IMR-90 (cell line): ENCODE measurements at regions of chr13 and their contacts with region 1.

Region 1: DNA sequence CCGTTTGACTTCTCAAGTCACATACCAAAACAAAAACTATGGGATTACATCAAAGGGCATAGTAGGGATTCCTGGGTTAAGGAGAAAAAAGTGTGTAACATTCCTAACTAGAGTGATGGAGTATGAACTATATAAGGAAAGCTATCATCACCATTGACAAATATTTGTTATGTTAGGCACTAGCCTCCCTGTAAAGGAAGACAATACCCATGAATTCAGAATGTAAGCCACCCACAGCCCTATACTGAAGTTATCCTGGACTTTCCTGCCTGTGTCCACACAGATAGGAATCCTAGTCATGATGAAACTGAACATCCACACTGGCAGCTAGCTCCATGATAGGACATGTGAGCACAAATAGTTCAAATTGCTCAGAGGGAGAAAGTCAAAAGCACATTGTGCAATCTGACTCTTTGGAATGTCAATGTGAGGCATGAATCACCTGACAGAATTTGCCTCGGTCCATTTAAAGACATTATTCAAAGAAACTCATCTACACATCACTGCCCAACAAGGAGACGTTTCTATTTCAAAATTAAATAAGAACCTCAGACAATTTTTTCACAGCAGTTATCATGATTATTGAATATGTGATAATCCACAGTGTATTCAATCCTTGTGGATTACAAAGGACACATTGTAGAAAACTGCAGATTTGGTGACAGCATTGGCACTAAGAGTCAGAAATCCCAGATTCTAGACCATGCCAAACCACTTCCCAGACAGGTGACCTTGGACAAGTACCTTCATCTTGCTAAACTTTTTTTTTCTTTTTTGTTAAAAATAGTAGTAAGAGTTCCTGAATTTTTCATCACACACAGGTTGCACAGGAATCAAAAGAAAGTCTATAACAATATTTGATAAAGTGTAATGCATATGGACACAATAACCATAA is 529.3 kb downstream of the IRS2 start:
- DNase-seq: peak; percentile 97
- ATAC-seq: peak; percentile 94
- H3K4me3 ChIP-seq: no peak overlapping the region
- H3K27ac ChIP-seq: peak overlapping the region; percentile 72
- H3K4me1 ChIP-seq: no peaks in the 10 kb centered on the region; the same call in 1 of the 2 replicates
- H3K27me3 ChIP-seq: no peaks in the 10 kb centered on the region
- CTCF ChIP-seq: no peak
- POLR2A ChIP-seq: no peak
- RAD21 ChIP-seq: no peak

Region 2: DNA sequence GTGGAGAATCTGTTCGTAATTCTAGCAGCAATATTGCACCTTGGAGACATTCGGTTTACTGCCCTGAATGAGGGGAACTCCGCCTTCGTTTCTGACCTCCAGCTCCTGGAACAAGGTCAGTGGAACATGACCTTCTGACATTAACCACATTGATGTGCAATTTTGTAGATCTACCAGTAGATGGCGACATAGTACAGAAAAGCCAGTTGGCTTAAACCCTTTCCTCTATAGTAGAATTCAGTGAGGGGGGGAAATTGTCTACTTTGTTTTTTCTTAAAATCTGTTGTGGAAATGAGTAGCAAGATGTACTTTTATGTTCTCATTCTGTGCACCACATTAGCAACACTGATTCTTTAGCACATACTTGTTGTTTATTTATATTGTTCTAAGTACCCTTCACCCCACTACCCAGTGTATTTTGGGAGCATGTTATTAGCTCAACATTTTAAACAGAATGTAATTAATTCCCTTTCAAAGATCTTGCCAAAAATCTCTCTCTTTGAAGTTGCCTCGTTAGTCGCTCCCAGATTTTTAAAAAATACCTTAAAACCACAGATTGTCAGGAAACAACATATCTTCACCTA is 295.5 kb before region 1 on chr13:
- CTCF ChIA-PET with region 1: no interaction called
- POLR2A ChIA-PET with region 1: no interaction called
- dilution Hi-C with region 1: no loop called
- in situ Hi-C with region 1: no loop called
- intact Hi-C with region 1: loop called (anchors 10 kb)
- DNase-seq: peak; percentile 62
- ATAC-seq: peak; percentile 56
- H3K4me3 ChIP-seq: no peak overlapping the region
- H3K27ac ChIP-seq: no peak overlapping the region
- H3K4me1 ChIP-seq: peaks cover 11% of the 10 kb centered on the region
- H3K27me3 ChIP-seq: no peaks in the 10 kb centered on the region
- CTCF ChIP-seq: peak; percentile 88
- POLR2A ChIP-seq: no peak
- RAD21 ChIP-seq: peak; percentile 94

Region 3: DNA sequence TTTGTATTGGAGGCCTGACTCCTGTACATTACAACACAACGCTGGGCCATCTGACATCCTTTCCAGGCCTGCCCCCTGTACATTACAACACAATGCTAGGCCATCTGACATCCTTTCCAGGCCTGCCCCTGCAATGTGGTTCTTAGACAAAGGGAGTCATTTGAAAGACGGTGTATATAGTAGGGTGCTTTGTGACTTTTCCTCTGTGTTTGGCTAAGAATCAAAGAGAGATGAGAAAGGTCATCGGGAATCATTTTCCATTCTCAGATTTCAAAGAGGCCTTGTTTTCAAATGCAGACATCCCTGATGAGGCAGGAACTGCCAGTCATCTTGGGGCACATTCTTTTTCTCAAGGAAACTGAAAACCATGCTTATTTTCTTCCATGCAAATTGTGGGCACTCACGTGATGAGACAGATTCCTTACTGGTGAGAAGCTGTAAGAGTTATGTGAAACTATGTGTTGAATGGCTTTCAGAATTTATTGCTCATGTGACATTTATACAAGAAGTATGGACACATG is 76.1 kb before region 1 on chr13:
- CTCF ChIA-PET with region 1: no interaction called
- POLR2A ChIA-PET with region 1: no interaction called
- dilution Hi-C with region 1: no loop called
- in situ Hi-C with region 1: no loop called
- intact Hi-C with region 1: loop called (anchors 2 kb)
- DNase-seq: peak; percentile 90
- ATAC-seq: peak; percentile 93
- H3K4me3 ChIP-seq: no peak overlapping the region
- H3K27ac ChIP-seq: peak overlapping the region; percentile 13; the same call in 1 of the 2 replicates
- H3K4me1 ChIP-seq: peaks cover 3% of the 10 kb centered on the region
- H3K27me3 ChIP-seq: no peaks in the 10 kb centered on the region
- CTCF ChIP-seq: no peak
- POLR2A ChIP-seq: no peak
- RAD21 ChIP-seq: no peak

Region 4: DNA sequence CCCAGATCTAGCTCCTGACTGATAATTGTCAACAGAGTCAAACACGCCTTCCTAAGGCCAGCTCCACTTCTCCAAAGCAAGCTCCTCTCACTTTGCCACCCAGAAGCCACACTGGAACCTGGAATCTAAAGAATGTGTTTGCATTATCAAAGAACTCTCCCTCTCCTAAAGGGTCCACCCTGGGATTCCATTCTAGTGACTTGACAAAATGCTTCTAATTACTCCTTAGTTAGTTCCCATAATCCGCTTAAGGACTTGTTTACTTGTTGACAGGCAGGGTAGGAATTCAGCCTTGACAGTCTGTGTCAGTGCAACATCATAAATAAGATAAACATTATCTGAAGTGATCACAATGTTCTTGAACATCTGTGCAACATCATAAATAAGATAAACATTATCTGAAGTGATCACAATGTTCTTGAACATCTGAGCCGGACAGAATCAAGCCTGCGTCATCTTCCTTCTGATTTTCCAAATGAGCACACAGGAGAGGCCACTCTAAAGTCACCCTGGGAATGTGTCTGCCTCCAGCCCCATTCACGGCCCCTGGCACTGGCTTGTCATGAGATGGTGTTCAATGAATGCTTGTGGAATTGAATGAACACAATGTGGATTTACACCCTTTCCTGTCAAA is 17.2 kb after region 1 on chr13:
- CTCF ChIA-PET with region 1: no interaction called
- POLR2A ChIA-PET with region 1: no interaction called
- dilution Hi-C with region 1: no loop called
- in situ Hi-C with region 1: no loop called
- intact Hi-C with region 1: loop called (anchors 2 kb)
- DNase-seq: peak; percentile 72
- ATAC-seq: peak; percentile 86
- H3K4me3 ChIP-seq: no peak overlapping the region
- H3K27ac ChIP-seq: peak overlapping the region; percentile 36
- H3K4me1 ChIP-seq: peaks cover 10% of the 10 kb centered on the region; the same call in 1 of the 2 replicates
- H3K27me3 ChIP-seq: no peaks in the 10 kb centered on the region
- CTCF ChIP-seq: no peak
- POLR2A ChIP-seq: no peak
- RAD21 ChIP-seq: no peak

Region 5: GRCh38 chr13:109422161-109422560 is 165.0 kb after region 1 on chr13:
- CTCF ChIA-PET with region 1: no interaction called
- POLR2A ChIA-PET with region 1: no interaction called
- dilution Hi-C with region 1: no loop called
- in situ Hi-C with region 1: no loop called
- intact Hi-C with region 1: no loop called
- DNase-seq: no peak
- ATAC-seq: no peak
- H3K4me3 ChIP-seq: no peak overlapping the region
- H3K27ac ChIP-seq: no peak overlapping the region
- H3K4me1 ChIP-seq: no peaks in the 10 kb centered on the region
- H3K27me3 ChIP-seq: no peaks in the 10 kb centered on the region; the same call in 1 of the 2 replicates
- CTCF ChIP-seq: no peak
- POLR2A ChIP-seq: no peak
- RAD21 ChIP-seq: no peak

Region 6: GRCh38 chr13:109743706-109744453 is 486.8 kb after region 1 on chr13:
- CTCF ChIA-PET with region 1: no interaction called
- POLR2A ChIA-PET with region 1: no interaction called
- dilution Hi-C with region 1: no loop called
- in situ Hi-C with region 1: no loop called
- intact Hi-C with region 1: loop called (anchors 10 kb)
- DNase-seq: peak; percentile 78
- ATAC-seq: peak; percentile 52
- H3K4me3 ChIP-seq: no peak overlapping the region
- H3K27ac ChIP-seq: no peak overlapping the region
- H3K4me1 ChIP-seq: peaks cover 3% of the 10 kb centered on the region; the same call in 1 of the 2 replicates
- H3K27me3 ChIP-seq: peaks cover 22% of the 10 kb centered on the region
- CTCF ChIP-seq: no peak
- POLR2A ChIP-seq: no peak
- RAD21 ChIP-seq: no peak

Region 7: GRCh38 chr13:109778102-109778542 is 521.0 kb after region 1 on chr13:
- CTCF ChIA-PET with region 1: no interaction called
- POLR2A ChIA-PET with region 1: no interaction called
- dilution Hi-C with region 1: no loop called
- in situ Hi-C with region 1: no loop called
- intact Hi-C with region 1: loop called (anchors 2 kb)
- DNase-seq: peak; percentile 39
- ATAC-seq: no peak
- H3K4me3 ChIP-seq: no peak overlapping the region
- H3K27ac ChIP-seq: no peak overlapping the region
- H3K4me1 ChIP-seq: peaks cover 16% of the 10 kb centered on the region
- H3K27me3 ChIP-seq: no peaks in the 10 kb centered on the region
- CTCF ChIP-seq: no peak
- POLR2A ChIP-seq: no peak
- RAD21 ChIP-seq: no peak